ENCODE measurements at regions of chr12 and their contacts with region 1.

Region 1: GRCh38 chr12:120710031-120710804 is at the start of gene UNC119B:
- DNase-seq: no peak
- H3K4me3 ChIP-seq: peak within 1 kb of the TSS; percentile 70 to 97 (median 80)
- H3K27ac ChIP-seq: peak within 1 kb of the TSS; percentile 89 to 93 (median 91)
- H3K4me1 ChIP-seq: peaks cover 17 to 36% (median 33%) of the 10 kb centered on the region in 4 donors
- H3K27me3 ChIP-seq: no peaks in the 10 kb centered on the region
- CTCF ChIP-seq: no peak
- EP300 ChIP-seq: no peak
- POLR2A ChIP-seq: no peak
- total RNA-seq, gene UNC119B: 20.0 to 30.8 (median 28.5) TPM

Region 2: DNA sequence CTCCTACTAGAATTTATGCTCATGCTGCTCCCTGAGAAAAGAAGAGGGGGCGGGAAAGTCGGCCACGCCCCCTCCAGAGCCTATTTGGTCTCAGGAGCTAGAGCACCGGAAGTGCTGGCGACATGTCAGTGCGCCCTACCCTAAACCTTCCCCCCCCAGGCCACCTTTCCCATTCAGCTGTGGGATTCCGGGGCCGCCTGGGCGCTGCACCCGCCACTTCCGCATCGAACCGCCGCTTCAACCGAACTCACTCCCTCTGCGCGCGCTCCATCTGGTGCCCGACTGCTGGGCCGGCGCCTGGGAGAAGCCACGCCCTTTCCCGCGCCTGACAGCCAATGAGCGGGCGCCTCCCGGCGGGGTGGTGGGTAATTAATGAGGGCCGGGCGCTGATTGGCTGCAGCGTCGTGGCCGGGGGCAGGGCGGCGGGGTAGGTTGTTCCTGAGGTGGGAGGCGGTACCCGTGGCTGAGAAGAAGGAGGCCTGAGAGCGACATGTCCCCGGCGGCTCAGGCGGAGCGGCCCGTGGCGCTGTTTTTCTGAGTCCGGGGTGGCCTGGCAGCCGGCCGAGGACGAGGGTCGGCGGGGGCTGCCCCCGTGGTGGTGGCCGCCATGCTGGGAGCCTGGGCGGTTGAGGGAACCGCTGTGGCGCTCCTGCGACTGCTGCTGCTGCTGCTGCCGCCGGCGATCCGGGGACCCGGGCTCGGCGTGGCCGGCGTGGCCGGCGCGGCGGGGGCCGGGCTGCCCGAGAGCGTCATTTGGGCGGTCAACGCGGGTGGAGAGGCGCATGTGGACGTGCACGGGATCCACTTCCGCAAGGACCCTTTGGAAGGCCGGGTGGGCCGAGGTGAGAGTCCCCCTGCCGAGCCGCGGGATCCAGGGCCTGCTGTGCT is 23.3 kb before region 1 on chr12 and contains the start of gene MLEC:
- intact Hi-C with region 1: loop called (anchors 2 kb)
- DNase-seq: peak; percentile 100
- H3K4me3 ChIP-seq: peak within 1 kb of the TSS; percentile 84 to 98 (median 88)
- H3K27ac ChIP-seq: peak within 1 kb of the TSS; percentile 94 to 96 (median 94)
- H3K4me1 ChIP-seq: peaks cover 39 to 55% (median 48%) of the 10 kb centered on the region in 4 donors
- H3K27me3 ChIP-seq: no peaks in the 10 kb centered on the region
- CTCF ChIP-seq: peak in 2 of 3 experiments; percentile 10 to 26
- EP300 ChIP-seq: no peak
- POLR2A ChIP-seq: no peak
- total RNA-seq, gene MLEC: 37.8 to 55.5 (median 46.3) TPM

Measured in esophagus muscularis mucosa (tissue), 4 donors.